Natural killer cell (primary cell): ENCODE measurements at regions of chr16 and their contacts with region 1.

Region 1: DNA sequence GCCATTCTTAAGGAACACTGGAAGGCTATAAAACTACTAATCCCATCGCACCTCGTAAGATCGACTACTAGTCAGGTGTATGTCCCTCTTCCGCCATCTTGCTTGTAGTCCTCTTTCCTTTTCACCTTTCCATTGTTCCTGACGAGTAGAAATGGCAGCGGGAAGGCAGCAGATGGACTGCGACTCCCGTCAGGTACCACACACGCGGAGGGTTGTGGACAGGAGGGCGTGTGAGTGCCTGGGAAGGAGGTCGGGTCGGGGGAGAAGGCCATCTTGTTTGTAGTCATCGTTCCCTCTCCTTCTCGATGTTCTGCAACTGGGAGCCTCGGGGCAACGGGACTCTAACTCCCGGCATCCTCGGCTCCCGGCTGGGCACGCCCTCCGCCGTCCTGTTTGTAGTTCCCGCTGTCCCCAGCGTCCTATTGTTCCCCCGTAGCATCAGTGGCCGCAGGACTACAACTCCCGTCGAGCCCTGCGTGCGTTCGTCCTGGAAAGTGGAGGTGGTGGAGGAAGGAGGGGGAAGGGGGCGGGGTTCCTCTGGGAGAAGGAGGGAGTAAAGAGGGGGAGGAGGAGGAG is 324 bp upstream of the FBXL19 start:
- DNase-seq: peak; percentile 85 to 98
- ATAC-seq: peak; percentile 67 to 85 (median 72)
- H3K4me3 ChIP-seq: peak overlapping the region; percentile 86
- H3K4me3 Mint-ChIP-seq: peak overlapping the region; percentile 100
- H3K27ac ChIP-seq: peak overlapping the region; percentile 96
- H3K27ac Mint-ChIP-seq: peak overlapping the region; percentile 99 to 100
- H3K4me1 ChIP-seq: peaks cover 21% of the 10 kb centered on the region
- H3K4me1 Mint-ChIP-seq: peaks cover 15 to 38% of the 10 kb centered on the region in 2 donors
- H3K27me3 ChIP-seq: no peaks in the 10 kb centered on the region
- H3K27me3 Mint-ChIP-seq: no peaks in the 10 kb centered on the region
- CTCF ChIP-seq: no peak

Region 2: GRCh38 chr16:30657866-30658730 is 264.9 kb before region 1 on chr16 and contains the start of gene FBRS:
- intact Hi-C with region 1: loop called (anchors 1 kb)
- DNase-seq: peak; percentile 99 to 100
- ATAC-seq: peak; percentile 72 to 86 (median 74)
- H3K4me3 ChIP-seq: peak within 1 kb of the TSS; percentile 97
- H3K4me3 Mint-ChIP-seq: peak within 1 kb of the TSS; percentile 98
- H3K27ac ChIP-seq: peak within 1 kb of the TSS; percentile 99
- H3K27ac Mint-ChIP-seq: peak within 1 kb of the TSS; percentile 98 to 99
- H3K4me1 ChIP-seq: peaks cover 39% of the 10 kb centered on the region
- H3K4me1 Mint-ChIP-seq: peaks cover 38 to 52% of the 10 kb centered on the region in 2 donors
- H3K27me3 ChIP-seq: no peaks in the 10 kb centered on the region
- H3K27me3 Mint-ChIP-seq: no peaks in the 10 kb centered on the region
- CTCF ChIP-seq: peak; percentile 77
- total RNA-seq, gene FBRS: 158 to 182 (median 172) TPM

Region 3: GRCh38 chr16:30747799-30748634 is 175.0 kb before region 1 on chr16 and contains the start of gene PHKG2:
- intact Hi-C with region 1: loop called (anchors 1 kb)
- DNase-seq: peak; percentile 94 to 98
- ATAC-seq: peak; percentile 94 to 98 (median 95)
- H3K4me3 ChIP-seq: peak within 1 kb of the TSS; percentile 60
- H3K4me3 Mint-ChIP-seq: peak within 1 kb of the TSS; percentile 95
- H3K27ac ChIP-seq: peak within 1 kb of the TSS; percentile 79
- H3K27ac Mint-ChIP-seq: peak within 1 kb of the TSS; percentile 90 to 93
- H3K4me1 ChIP-seq: peaks cover 19% of the 10 kb centered on the region
- H3K4me1 Mint-ChIP-seq: peaks cover 34 to 45% of the 10 kb centered on the region in 2 donors
- H3K27me3 ChIP-seq: no peaks in the 10 kb centered on the region
- H3K27me3 Mint-ChIP-seq: no peaks in the 10 kb centered on the region
- CTCF ChIP-seq: no peak
- total RNA-seq, gene PHKG2: 50.5 to 86.1 (median 64.8) TPM

Region 4: DNA sequence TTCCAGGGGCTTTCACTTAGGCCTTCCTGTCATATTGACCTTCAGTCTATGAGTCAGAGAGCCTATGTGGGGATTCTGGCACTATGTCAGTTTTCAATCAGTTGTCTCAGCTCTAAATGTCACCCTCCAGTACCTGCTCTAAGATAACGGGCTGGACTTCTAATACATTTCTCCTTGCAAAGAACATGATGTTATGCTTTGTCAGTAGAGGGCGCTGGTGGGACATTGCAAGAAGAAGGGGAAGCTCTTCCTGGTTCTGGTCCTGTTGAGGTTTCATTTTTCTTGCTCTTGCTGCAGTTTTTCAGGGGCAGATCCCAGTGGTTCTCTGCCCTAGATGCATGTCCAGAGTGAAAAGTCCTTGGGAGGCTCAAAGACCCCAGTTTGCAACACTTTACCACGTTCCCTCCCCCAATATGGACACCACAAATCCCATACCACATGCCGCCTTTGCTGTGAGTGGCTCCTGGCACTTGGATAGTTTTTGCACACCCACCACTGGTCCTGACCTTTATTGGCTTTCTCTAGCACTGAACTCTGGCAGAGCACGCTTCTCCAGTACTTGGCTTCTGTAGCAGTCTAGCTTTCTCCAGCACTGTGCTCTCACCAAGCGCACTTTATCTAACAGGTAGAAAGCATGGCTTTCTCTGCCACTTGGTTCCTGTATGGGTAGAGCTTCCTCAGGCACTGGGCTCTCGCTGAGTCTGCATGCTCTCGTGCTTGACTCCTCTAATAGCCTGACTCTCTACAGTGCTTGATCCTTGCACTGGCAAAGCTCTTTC is 78.2 kb before region 1 on chr16:
- intact Hi-C with region 1: loop called (anchors 1 kb)
- DNase-seq: peak; percentile 51 to 94
- ATAC-seq: peak; percentile 87 to 98 (median 98)
- H3K4me3 ChIP-seq: no peak overlapping the region
- H3K4me3 Mint-ChIP-seq: peak overlapping the region; percentile 4
- H3K27ac ChIP-seq: no peak overlapping the region
- H3K27ac Mint-ChIP-seq: peak overlapping the region in 1 of 2 donors; percentile 53
- H3K4me1 ChIP-seq: peaks cover 7% of the 10 kb centered on the region
- H3K4me1 Mint-ChIP-seq: peaks cover 9 to 10% of the 10 kb centered on the region in 2 donors
- H3K27me3 ChIP-seq: no peaks in the 10 kb centered on the region
- H3K27me3 Mint-ChIP-seq: no peaks in the 10 kb centered on the region
- CTCF ChIP-seq: peak; percentile 86

Region 5: DNA sequence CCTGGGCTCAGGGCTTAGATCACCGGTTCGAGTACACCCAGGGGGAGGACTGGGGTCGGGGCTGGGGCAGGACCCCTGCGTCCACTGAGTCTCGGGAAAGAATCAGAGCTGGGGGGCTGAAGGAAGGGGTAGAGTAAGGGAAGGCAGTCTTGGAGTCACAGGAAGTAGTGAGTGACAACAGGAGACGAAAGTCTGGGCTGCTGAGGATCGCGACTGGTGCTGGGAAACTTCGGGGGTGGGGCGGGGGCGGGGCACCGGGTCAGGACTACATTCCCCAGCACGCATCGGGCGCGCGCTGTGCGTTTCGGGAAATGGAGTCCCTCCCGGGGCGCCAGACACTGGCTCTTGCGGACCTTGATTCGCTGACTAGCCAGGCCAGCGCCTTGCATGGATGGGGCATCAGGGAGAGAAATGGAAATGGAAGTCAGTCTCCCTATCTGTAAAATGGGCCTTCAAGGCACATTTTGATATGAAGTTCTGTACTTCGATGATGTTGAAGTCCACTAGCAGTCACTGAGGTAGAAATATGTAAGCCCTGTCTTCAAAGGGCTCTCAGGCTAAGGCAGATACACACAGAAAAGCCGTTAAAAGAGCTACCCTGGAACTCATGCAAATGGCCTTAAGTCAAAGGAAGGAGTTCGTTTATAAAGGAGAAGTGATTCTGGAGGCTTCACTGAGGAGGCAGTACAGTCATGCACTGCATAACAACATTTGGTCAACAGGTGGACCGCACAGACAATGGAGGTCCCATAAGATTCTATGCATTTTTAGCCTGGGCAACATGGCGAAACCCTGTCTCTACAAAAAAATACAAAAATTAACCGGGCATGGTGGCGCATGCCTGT is 25.9 kb before region 1 on chr16:
- intact Hi-C with region 1: loop called (anchors 1 kb)
- DNase-seq: peak; percentile 62 to 89
- ATAC-seq: peak; percentile 56 to 66 (median 57)
- H3K4me3 ChIP-seq: peak overlapping the region; percentile 1
- H3K4me3 Mint-ChIP-seq: peak overlapping the region; percentile 61
- H3K27ac ChIP-seq: peak overlapping the region; percentile 34
- H3K27ac Mint-ChIP-seq: peak overlapping the region; percentile 70 to 93
- H3K4me1 ChIP-seq: peaks cover 53% of the 10 kb centered on the region
- H3K4me1 Mint-ChIP-seq: peaks cover 30 to 56% of the 10 kb centered on the region in 2 donors
- H3K27me3 ChIP-seq: no peaks in the 10 kb centered on the region
- H3K27me3 Mint-ChIP-seq: no peaks in the 10 kb centered on the region
- CTCF ChIP-seq: no peak

Region 6: GRCh38 chr16:31032736-31033708 is 110.0 kb after region 1 on chr16 and contains the start of gene STX4:
- intact Hi-C with region 1: loop called (anchors 2 kb)
- DNase-seq: peak; percentile 97 to 100
- ATAC-seq: peak; percentile 78 to 89 (median 82)
- H3K4me3 ChIP-seq: peak within 1 kb of the TSS; percentile 80
- H3K4me3 Mint-ChIP-seq: peak within 1 kb of the TSS; percentile 99
- H3K27ac ChIP-seq: peak within 1 kb of the TSS; percentile 92
- H3K27ac Mint-ChIP-seq: peak within 1 kb of the TSS; percentile 95 to 99
- H3K4me1 ChIP-seq: peaks cover 20% of the 10 kb centered on the region
- H3K4me1 Mint-ChIP-seq: peaks cover 36 to 37% of the 10 kb centered on the region in 2 donors
- H3K27me3 ChIP-seq: no peaks in the 10 kb centered on the region
- H3K27me3 Mint-ChIP-seq: no peaks in the 10 kb centered on the region
- CTCF ChIP-seq: no peak
- total RNA-seq, gene STX4: 128 to 145 (median 133) TPM